CD4-positive, alpha-beta memory T cell (primary cell): ENCODE measurements at regions of chr4 and their contacts with region 1.

Region 1: DNA sequence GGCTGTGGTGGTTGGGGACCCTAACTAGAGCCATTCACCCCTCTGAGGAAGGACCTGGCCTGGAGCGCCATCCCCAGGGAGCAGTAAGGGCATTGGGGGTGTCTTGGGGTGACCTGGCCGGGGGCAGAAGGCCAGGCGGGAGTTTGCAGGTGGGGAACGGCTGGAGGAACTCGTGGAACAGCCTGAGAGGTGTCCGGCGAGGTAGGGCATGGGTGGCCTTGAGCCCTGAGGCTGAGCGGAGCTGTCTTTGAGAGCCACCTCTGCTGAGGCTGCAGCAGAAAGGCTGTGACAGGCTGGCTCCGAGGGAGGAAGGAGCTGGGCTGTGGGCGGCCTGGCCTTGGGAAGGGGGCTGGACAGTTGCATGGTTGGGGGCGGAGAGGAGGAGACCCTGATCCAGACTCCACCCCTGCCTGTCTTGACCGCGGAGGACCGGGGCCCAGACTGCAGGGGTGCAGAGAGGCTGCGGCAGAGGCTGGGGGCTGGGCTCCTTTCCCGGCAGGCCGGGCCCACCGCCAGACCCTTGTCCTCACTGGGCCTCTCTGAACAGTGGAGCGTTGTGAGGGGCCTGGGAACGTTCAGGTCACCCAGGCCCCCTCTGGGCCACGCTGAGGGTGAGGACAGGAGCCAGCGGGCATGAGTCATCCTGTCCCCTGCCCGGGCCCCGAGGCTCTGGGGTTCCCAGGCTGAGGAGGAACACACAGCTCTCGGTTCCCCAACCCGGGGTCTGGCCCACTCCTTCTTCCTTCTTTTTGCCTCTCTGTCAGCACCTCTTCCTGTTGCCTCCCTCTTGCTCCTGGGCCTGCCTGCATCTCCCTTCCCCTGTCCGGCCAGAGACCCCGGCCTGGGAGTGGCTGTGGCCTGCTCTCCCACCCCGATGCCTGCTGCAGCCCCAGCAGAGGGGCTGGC is 8.1 kb downstream of the SH3BP2 start:
- DNase-seq: peak in 1 of 5 donors; percentile 29
- H3K4me3 ChIP-seq: no peak overlapping the region
- H3K4me3 Mint-ChIP-seq: peak overlapping the region; percentile 18 to 73 (median 55)
- H3K27ac ChIP-seq: peak overlapping the region; percentile 74
- H3K27ac Mint-ChIP-seq: peak overlapping the region in 6 of 7 donors; percentile 48 to 91 (median 78)
- H3K4me1 ChIP-seq: peaks cover 48% of the 10 kb centered on the region
- H3K4me1 Mint-ChIP-seq: peaks cover 19 to 54% (median 31%) of the 10 kb centered on the region in 4 donors
- H3K27me3 ChIP-seq: no peaks in the 10 kb centered on the region
- H3K27me3 Mint-ChIP-seq: no peaks in the 10 kb centered on the region

Region 2: GRCh38 chr4:2418650-2419571 is 382.0 kb before region 1 on chr4 and contains the start of gene CFAP99:
- CTCF ChIA-PET with region 1: no interaction called
- POLR2A ChIA-PET with region 1: no interaction called
- intact Hi-C with region 1: no loop called
- DNase-seq: peak; percentile 96 to 99 (median 97)
- H3K4me3 ChIP-seq: peak within 1 kb of the TSS; percentile 44 to 72
- H3K4me3 Mint-ChIP-seq: peak within 1 kb of the TSS; percentile 89 to 95 (median 92)
- H3K27ac ChIP-seq: peak within 1 kb of the TSS; percentile 78
- H3K27ac Mint-ChIP-seq: peak within 1 kb of the TSS; percentile 92 to 100 (median 98)
- H3K4me1 ChIP-seq: peaks cover 39% of the 10 kb centered on the region
- H3K4me1 Mint-ChIP-seq: peaks cover 29 to 48% (median 36%) of the 10 kb centered on the region in 4 donors
- H3K27me3 ChIP-seq: no peaks in the 10 kb centered on the region
- H3K27me3 Mint-ChIP-seq: no peaks in the 10 kb centered on the region
- total RNA-seq, gene CFAP99: 0.12 to 0.19 TPM

Region 3: DNA sequence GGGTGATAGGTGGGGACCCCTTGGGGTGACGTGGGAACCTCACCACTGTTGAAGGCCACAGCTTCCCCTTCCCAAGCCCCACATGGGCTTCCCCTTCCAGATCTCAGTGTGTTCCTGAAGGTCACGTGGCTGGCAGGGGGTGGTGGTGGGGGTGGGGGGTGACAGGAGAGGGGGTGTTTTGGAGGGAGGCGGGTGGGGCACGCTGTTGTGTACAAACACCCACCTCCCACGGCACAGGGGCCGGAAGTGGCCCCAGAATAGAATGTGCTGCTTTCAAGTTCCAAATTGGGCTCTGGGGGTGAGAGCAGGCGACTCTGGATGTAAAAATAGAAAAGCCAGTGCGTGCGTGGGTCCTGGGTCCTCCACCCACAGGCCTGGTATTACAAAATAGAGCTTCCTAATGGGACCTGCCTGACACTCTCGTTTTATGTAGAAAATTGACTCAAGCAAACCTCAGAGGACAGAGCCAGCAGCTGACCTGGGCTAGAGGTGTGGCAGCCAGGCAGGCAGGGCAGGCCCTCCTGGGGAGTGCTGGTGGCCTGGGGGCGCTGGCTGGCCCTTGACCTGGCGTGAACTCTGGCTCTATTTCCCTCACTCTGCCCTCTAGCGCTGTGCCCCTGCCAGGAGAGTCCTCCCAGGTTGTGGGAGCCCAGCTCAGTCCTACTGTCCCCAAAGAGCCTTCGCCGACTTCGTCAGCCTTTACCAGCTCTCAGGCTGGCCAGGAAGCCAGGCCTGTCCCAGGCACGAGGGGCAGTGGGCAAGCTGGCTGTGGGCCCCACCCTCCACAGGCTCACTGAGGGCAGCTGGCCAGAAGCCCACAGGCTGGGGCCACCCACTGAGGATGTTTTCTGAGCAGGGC is 13.5 kb before region 1 on chr4:
- CTCF ChIA-PET with region 1: interaction called, 5 read pairs
- POLR2A ChIA-PET with region 1: interaction called, 40 read pairs
- intact Hi-C with region 1: loop called (anchors 2 kb)
- DNase-seq: peak in 4 of 5 donors; percentile 42 to 62 (median 46)
- H3K4me3 ChIP-seq: no peak overlapping the region
- H3K4me3 Mint-ChIP-seq: peak overlapping the region in 7 of 8 donors; percentile 41 to 78 (median 64)
- H3K27ac ChIP-seq: peak overlapping the region; percentile 74
- H3K27ac Mint-ChIP-seq: peak overlapping the region; percentile 88 to 96 (median 94)
- H3K4me1 ChIP-seq: peaks cover 36% of the 10 kb centered on the region
- H3K4me1 Mint-ChIP-seq: peaks cover 21 to 61% (median 39%) of the 10 kb centered on the region in 4 donors
- H3K27me3 ChIP-seq: no peaks in the 10 kb centered on the region
- H3K27me3 Mint-ChIP-seq: no peaks in the 10 kb centered on the region

Region 4: DNA sequence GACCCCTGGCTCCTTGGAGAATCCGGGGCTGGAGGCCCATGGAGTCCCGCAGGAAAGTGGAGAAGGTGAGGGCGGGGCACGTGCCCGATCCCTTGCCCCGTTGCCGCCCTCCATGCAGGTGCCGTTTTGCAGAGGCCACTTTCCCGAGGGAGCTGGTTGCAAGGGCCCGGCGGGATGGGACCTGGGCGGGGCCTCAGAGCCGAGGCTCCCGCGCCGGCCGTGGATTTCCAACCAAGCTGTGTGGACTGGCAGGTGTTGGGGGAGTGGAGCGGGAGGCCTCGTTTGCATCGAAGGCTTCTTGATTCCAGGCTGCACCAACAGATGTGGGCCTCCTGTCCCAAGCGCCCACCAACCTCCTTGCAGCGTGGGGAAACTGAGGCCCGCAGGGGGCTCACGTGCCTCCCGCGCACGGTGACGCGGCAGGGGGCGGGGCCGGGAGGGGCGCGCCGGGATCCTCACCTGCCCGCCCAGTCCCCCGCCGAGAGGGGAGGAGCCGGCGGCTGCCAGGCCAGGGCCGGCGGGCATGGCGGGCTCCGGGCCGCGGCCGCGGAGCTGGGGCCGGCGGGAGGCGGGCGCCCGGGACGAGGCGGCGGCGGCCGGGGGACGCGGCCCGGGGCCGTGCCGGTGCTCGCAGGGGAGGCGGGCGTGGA is 16.9 kb after region 1 on chr4:
- CTCF ChIA-PET with region 1: interaction called, 3 read pairs
- POLR2A ChIA-PET with region 1: interaction called, 77 read pairs
- intact Hi-C with region 1: no loop called
- DNase-seq: no peak
- H3K4me3 ChIP-seq: peak overlapping the region in 1 of 2 donors; percentile 13
- H3K4me3 Mint-ChIP-seq: peak overlapping the region; percentile 78 to 91 (median 85)
- H3K27ac ChIP-seq: no peak overlapping the region
- H3K27ac Mint-ChIP-seq: peak overlapping the region in 4 of 7 donors; percentile 23 to 98 (median 88)
- H3K4me1 ChIP-seq: peaks cover 57% of the 10 kb centered on the region
- H3K4me1 Mint-ChIP-seq: peaks cover 33 to 66% (median 52%) of the 10 kb centered on the region in 4 donors
- H3K27me3 ChIP-seq: no peaks in the 10 kb centered on the region
- H3K27me3 Mint-ChIP-seq: no peaks in the 10 kb centered on the region

Region 5: DNA sequence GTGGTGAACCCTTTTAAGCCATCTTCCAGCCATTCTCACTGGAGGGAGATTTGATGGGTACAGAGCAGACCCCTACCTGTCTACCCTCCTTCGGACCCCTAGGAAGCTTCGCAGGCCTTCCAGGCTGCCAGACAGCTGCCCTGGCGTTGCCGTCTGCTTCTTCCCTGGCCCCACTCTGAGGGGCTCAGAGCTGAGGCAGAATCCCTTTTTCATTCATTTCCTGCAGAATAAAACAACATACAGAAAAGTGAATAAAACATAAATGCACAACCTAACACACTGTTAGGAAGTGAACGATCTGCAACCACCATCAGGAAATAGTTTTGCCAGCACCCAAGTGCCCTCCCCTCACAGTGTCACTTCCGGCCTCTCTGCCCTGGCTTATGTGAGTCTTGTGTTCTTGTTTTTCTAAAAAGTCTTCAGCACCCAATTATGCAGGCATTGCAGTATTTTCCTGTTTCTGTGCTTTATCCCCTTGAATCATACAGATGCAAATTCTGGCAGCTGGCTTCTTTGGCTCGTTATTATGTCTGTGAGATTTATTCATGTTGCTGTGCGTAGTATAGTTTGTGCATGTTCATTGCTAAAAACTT is 37.1 kb after region 1 on chr4:
- CTCF ChIA-PET with region 1: interaction called, 3 read pairs
- POLR2A ChIA-PET with region 1: interaction called, 12 read pairs
- intact Hi-C with region 1: loop called (anchors 5 kb)
- DNase-seq: peak; percentile 75 to 89 (median 81)
- H3K4me3 ChIP-seq: peak overlapping the region; percentile 1 to 54
- H3K4me3 Mint-ChIP-seq: peak overlapping the region; percentile 69 to 92 (median 86)
- H3K27ac ChIP-seq: peak overlapping the region; percentile 55
- H3K27ac Mint-ChIP-seq: peak overlapping the region; percentile 76 to 95 (median 88)
- H3K4me1 ChIP-seq: peaks cover 74% of the 10 kb centered on the region
- H3K4me1 Mint-ChIP-seq: peaks cover 36 to 73% (median 47%) of the 10 kb centered on the region in 4 donors
- H3K27me3 ChIP-seq: no peaks in the 10 kb centered on the region
- H3K27me3 Mint-ChIP-seq: no peaks in the 10 kb centered on the region

Region 6: DNA sequence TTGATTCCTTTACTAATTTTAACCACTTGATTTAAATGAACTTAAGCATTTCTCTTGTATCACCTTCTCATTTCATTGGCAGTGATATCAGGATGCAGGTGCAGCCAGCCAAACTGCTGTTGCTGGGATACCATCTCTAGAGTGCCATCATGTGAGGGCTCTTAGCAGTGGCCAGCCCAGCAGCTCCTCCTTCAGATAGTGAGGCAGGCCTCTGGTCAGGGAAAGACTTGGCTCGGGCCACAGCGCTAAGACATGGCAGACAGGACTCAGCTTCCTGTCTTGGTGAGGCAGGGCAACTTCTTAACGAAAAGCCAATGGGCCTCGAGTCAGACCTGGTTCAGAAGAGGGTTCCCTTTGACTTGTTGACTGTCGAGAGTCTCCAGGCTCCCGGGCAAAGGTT is 112.2 kb after region 1 on chr4:
- CTCF ChIA-PET with region 1: no interaction called
- POLR2A ChIA-PET with region 1: no interaction called
- intact Hi-C with region 1: no loop called
- DNase-seq: no peak
- H3K4me3 ChIP-seq: no peak overlapping the region
- H3K4me3 Mint-ChIP-seq: no peak overlapping the region
- H3K27ac ChIP-seq: no peak overlapping the region
- H3K27ac Mint-ChIP-seq: no peak overlapping the region
- H3K4me1 ChIP-seq: no peaks in the 10 kb centered on the region
- H3K4me1 Mint-ChIP-seq: peaks cover 11 to 25% (median 16%) of the 10 kb centered on the region in 4 donors
- H3K27me3 ChIP-seq: no peaks in the 10 kb centered on the region
- H3K27me3 Mint-ChIP-seq: no peaks in the 10 kb centered on the region